ENCODE measurements at regions of chr22 and their contacts with region 1.

Region 1: GRCh38 chr22:37676736-37677492 is 1.5 kb downstream of the LGALS1 start:
- DNase-seq: peak in 1 of 2 donors; percentile 96
- H3K4me3 ChIP-seq: peak overlapping the region; percentile 70 to 71
- H3K27ac ChIP-seq: peak overlapping the region; percentile 98
- H3K4me1 ChIP-seq: peaks cover 77% of the 10 kb centered on the region
- H3K27me3 ChIP-seq: no peaks in the 10 kb centered on the region
- CTCF ChIP-seq: no peak
- POLR2A ChIP-seq: no peak

Region 2: GRCh38 chr22:37162221-37163095 is 514.5 kb before region 1 on chr22:
- intact Hi-C with region 1: no loop called
- DNase-seq: no peak
- H3K4me3 ChIP-seq: no peak overlapping the region
- H3K27ac ChIP-seq: no peak overlapping the region
- H3K4me1 ChIP-seq: peaks cover 7% of the 10 kb centered on the region
- H3K27me3 ChIP-seq: no peaks in the 10 kb centered on the region
- CTCF ChIP-seq: no peak
- POLR2A ChIP-seq: no peak

Region 3: DNA sequence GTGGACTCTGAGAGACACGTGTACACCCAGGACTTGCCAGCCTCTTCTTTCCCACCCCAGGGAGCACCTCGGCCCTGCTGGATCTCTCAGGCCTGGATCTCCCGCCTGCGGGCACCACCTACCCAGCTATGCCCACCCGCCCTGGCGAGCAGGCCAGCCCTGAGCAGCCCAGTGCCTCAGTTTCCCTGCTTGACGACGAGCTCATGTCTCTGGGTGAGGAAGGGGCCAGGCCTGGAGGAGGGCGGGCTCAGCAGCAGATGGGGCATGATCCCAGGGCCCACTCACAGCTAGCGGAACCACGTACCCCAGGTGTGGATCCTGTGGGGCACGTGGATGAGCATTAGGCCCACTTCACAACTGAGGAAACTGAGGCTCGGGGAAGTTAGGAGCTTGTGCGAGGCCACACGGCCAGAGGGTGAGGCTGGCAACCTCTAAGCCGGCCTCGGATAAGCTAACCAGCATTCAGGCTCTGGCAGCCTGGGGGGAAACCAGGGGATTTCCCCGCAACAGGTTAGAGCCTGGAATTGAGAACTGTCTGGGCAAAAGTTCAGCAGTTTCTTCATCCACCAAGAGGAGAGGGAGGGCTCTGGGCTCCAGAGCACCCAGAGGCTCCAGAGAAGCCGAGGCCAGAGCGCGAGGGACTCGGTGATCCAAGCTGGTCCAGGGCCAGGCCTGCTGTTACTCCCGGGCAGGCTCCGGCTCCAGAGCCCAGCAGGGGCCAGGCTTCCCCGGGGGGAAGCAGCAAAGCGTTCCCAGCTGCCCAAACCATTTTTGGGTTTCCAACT is 51.0 kb before region 1 on chr22:
- intact Hi-C with region 1: loop called (anchors 5 kb)
- DNase-seq: no peak
- H3K4me3 ChIP-seq: no peak overlapping the region
- H3K27ac ChIP-seq: peak overlapping the region; percentile 81
- H3K4me1 ChIP-seq: peaks cover 39% of the 10 kb centered on the region
- H3K27me3 ChIP-seq: no peaks in the 10 kb centered on the region
- CTCF ChIP-seq: no peak
- POLR2A ChIP-seq: no peak

Region 4: DNA sequence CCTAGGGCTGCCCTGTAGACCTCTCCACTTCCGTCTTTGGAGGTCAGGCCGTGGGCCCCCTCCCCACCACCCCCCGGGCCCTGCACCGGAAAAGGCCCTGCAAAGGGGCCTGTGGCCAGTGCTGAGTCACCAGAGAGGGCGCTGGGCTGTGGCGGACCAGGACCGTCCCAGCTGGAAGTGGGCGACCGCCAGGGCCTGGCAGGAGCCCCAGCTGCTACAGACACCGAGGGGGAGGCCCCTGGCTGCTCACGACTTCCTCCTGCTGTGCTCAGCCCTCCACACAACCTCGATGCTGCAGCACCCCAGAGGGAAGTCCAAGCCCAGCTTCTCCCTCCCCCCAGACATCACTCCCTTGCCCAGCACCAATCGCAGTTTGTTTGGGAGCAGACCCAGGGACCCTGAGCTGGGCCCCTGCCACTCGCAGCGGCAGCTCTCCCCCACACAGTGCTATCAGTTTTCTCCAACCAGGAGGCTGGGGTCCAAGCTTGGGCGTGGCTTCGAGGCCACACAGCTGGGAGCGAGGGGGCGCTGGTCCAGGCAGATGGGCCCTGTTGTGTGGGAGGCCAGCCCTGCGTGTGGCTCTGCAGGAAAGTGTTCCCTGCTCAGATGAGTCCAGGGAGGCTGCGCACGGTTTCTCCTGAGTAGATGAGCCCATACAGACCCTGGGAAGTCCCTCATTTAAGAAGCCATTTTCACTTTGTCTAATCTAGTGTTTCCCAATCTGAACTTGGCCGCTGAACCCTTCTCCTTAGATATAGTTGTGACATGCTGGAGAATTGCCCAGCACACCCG is 43.1 kb before region 1 on chr22:
- intact Hi-C with region 1: loop called (anchors 5 kb)
- DNase-seq: peak in 1 of 2 donors; percentile 96
- H3K4me3 ChIP-seq: peak overlapping the region; percentile 7 to 39
- H3K27ac ChIP-seq: peak overlapping the region; percentile 82
- H3K4me1 ChIP-seq: peaks cover 55% of the 10 kb centered on the region
- H3K27me3 ChIP-seq: no peaks in the 10 kb centered on the region
- CTCF ChIP-seq: peak in 1 of 3 experiments; percentile 4
- POLR2A ChIP-seq: no peak

Region 5: GRCh38 chr22:37643225-37643847 is 33.6 kb before region 1 on chr22:
- intact Hi-C with region 1: loop called (anchors 5 kb)
- DNase-seq: no peak
- H3K4me3 ChIP-seq: no peak overlapping the region
- H3K27ac ChIP-seq: peak overlapping the region; percentile 57
- H3K4me1 ChIP-seq: peaks cover 48% of the 10 kb centered on the region
- H3K27me3 ChIP-seq: no peaks in the 10 kb centered on the region
- CTCF ChIP-seq: peak; percentile 69 to 87 (median 79)
- POLR2A ChIP-seq: no peak

Region 6: GRCh38 chr22:37745548-37746365 is 68.8 kb after region 1 on chr22:
- intact Hi-C with region 1: loop called (anchors 5 kb)
- DNase-seq: no peak
- H3K4me3 ChIP-seq: peak overlapping the region; percentile 73 to 78
- H3K27ac ChIP-seq: peak overlapping the region; percentile 93
- H3K4me1 ChIP-seq: peaks cover 75% of the 10 kb centered on the region
- H3K27me3 ChIP-seq: no peaks in the 10 kb centered on the region
- CTCF ChIP-seq: no peak
- POLR2A ChIP-seq: peak in 1 of 2 donors; percentile 43